Natural killer cell (primary cell): ENCODE measurements at regions of chr2 and their contacts with region 1.

Region 1: DNA sequence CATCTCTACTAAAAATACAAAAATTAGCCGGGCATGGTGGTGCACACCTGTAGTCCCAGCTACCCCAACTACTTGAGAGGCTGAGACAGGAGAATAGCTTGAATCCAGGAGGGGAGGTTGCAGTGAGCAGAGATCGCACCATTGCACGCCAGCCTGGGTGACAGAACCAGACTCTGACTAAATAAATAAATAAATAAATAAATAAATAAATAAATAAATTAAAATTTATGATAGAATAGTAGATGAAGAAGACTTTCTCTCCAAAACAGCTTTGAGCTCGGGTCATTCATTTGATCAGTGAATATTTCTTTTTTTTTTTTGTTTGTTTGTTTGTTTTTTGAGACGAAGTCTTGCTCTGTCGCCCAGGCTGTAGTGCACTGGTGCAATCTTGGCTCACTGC is 17.6 kb upstream of the MTA3 start:
- DNase-seq: no peak
- ATAC-seq: no peak
- H3K4me3 ChIP-seq: no peak overlapping the region
- H3K4me3 Mint-ChIP-seq: no peak overlapping the region
- H3K27ac ChIP-seq: no peak overlapping the region
- H3K27ac Mint-ChIP-seq: no peak overlapping the region
- H3K4me1 ChIP-seq: peaks cover 3% of the 10 kb centered on the region
- H3K4me1 Mint-ChIP-seq: peaks cover 0 to 4% of the 10 kb centered on the region in 2 donors
- H3K27me3 ChIP-seq: no peaks in the 10 kb centered on the region
- H3K27me3 Mint-ChIP-seq: peaks cover 0 to 5% of the 10 kb centered on the region in 2 donors
- CTCF ChIP-seq: no peak

Region 2: DNA sequence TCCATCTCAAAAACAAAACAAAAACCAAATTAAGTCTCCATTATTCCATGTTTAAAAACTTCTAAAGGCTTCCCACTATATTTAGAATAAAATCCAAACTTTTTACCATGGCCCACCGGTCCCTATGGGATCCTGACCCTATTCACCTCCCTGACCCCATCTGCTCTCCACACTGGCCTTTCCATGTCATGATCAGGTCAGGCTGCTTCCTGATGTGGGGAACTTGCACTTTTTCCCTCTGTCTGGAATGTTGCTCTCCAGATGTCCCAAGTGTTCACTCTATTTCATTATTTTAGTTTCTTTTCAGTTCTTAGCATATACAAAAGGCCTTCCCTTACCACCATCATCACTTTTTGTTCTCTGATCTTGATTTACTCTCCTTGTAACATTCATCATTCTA is 10.0 kb after region 1 on chr2:
- intact Hi-C with region 1: loop called (anchors 1 kb)
- DNase-seq: no peak
- ATAC-seq: no peak
- H3K4me3 ChIP-seq: no peak overlapping the region
- H3K4me3 Mint-ChIP-seq: no peak overlapping the region
- H3K27ac ChIP-seq: no peak overlapping the region
- H3K27ac Mint-ChIP-seq: no peak overlapping the region
- H3K4me1 ChIP-seq: no peaks in the 10 kb centered on the region
- H3K4me1 Mint-ChIP-seq: no peaks in the 10 kb centered on the region
- H3K27me3 ChIP-seq: no peaks in the 10 kb centered on the region
- H3K27me3 Mint-ChIP-seq: peaks cover 0 to 11% of the 10 kb centered on the region in 2 donors
- CTCF ChIP-seq: no peak